Panc1 (cell line): ENCODE measurements at regions of chr13 and their contacts with region 1.

Region 1: GRCh38 chr13:102845630-102846260 is at the start of gene ERCC5:
- DNase-seq: peak; percentile 75
- ATAC-seq: peak; percentile 97
- H3K4me3 ChIP-seq: peak within 1 kb of the TSS; percentile 93 to 97
- H3K27ac ChIP-seq: peak within 1 kb of the TSS; percentile 91
- H3K4me1 ChIP-seq: peaks cover 7% of the 10 kb centered on the region
- H3K27me3 ChIP-seq: no peaks in the 10 kb centered on the region
- CTCF ChIP-seq: no peak
- total RNA-seq, gene ERCC5: 19.6 TPM

Region 2: GRCh38 chr13:102724923-102725322 is 120.8 kb before region 1 on chr13:
- CTCF ChIA-PET with region 1: no interaction called
- POLR2A ChIA-PET with region 1: no interaction called
- in situ Hi-C with region 1: no loop called
- intact Hi-C with region 1: loop called (anchors 2 kb)
- DNase-seq: no peak
- ATAC-seq: peak; percentile 87
- H3K4me3 ChIP-seq: no peak overlapping the region
- H3K27ac ChIP-seq: no peak overlapping the region
- H3K4me1 ChIP-seq: no peaks in the 10 kb centered on the region
- H3K27me3 ChIP-seq: peaks cover 2% of the 10 kb centered on the region
- CTCF ChIP-seq: peak; percentile 58

Region 3: DNA sequence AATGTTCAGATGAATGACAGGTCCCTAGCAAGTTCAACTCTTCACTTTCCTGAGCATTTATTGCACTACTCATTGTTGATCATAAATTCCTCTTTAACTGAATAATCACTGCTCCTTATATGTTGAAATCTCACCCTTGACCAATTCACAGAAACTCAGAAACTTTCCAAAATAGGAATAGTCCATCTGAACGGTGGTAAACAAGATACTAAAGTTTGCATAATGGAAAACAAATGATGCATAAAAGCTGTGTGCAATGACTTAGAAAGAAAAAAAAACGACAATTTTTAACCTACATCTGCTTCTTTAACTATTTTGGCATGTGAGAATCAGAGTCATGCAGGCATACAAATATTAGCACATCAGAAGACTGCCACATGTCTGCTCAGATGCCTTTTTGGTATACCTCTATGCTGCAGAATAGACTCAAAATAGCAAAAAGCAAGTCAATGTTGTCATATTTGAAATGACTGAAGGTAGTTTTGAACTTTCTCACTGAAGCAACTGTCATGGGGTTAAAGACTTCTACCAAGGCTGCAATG is 185.7 kb after region 1 on chr13:
- CTCF ChIA-PET with region 1: no interaction called
- POLR2A ChIA-PET with region 1: no interaction called
- in situ Hi-C with region 1: no loop called
- intact Hi-C with region 1: no loop called
- DNase-seq: no peak
- ATAC-seq: no peak
- H3K4me3 ChIP-seq: no peak overlapping the region
- H3K27ac ChIP-seq: no peak overlapping the region
- H3K4me1 ChIP-seq: no peaks in the 10 kb centered on the region
- H3K27me3 ChIP-seq: no peaks in the 10 kb centered on the region
- CTCF ChIP-seq: no peak